ENCODE measurements at regions of chr12 and their contacts with region 1.

Region 1: DNA sequence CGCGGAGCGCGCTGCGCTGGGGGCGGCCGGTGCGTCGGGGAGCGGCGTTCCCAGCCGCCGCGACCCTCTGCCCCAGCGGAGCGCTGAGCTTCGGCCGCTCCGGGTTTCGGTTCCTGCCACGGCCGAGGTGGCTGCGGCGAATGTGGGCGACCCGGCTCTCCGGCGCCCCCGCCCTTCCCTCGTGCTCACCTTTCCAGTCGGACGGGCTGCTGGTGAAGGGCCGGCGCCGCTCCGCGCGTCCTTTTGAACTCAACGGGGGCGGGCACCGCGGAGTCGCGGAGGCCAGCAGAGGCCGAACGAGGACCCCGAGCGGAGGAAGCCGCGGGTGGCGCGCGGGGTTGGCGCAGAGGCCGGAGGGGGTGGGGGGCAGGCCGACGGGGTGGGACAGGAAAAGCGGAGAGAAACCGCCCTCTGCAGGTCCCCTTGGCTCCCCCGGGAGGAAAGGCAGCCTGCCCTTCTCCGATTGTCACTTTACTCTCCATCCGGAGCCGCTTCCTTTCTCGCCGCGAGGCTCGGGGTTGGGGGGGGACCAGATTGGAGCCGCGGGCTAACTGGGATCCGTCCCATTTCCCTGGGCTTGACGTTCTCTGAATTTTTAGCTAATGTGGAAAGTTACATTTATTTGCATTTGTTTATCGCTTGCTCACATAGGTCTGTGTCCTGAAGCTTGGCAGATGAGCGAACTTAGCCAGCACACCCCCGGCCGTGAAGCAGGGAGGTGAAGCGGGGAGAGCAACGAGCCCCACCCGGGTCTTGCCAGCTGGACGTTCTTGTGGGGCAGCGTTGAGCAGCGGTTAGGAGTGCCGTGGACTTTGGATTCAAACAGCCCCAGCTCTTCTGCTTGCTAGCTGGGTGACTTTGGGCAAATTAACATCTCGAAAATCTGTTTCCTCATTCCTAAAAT is at the start of gene SMAGP:
- DNase-seq: peak in 1 of 2 experiments; percentile 89
- H3K4me3 ChIP-seq: peak within 1 kb of the TSS; percentile 42 to 84 (median 62)
- H3K27ac ChIP-seq: no peak within 1 kb of the TSS; the same call in 1 of the 2 replicates
- H3K4me1 ChIP-seq: peaks cover 0 to 6% (median 2%) of the 10 kb centered on the region in 4 experiments; a peak in 5 of 7 replicates
- H3K27me3 ChIP-seq: peaks cover 0 to 11% (median 8%) of the 10 kb centered on the region in 4 experiments; a peak in 6 of 7 replicates
- CTCF ChIP-seq: no peak
- EP300 ChIP-seq: 0 out of 3 replicates have a peak, but pooled peaks of 1 of the 2 experiments have one; percentile 13
- POLR2A ChIP-seq: peak; percentile 43 to 63
- RAD21 ChIP-seq: no peak; a peak in 2 of 4 replicates
- total RNA-seq, gene SMAGP: 9.2 and 9.4 TPM in 2 replicates

Region 2: DNA sequence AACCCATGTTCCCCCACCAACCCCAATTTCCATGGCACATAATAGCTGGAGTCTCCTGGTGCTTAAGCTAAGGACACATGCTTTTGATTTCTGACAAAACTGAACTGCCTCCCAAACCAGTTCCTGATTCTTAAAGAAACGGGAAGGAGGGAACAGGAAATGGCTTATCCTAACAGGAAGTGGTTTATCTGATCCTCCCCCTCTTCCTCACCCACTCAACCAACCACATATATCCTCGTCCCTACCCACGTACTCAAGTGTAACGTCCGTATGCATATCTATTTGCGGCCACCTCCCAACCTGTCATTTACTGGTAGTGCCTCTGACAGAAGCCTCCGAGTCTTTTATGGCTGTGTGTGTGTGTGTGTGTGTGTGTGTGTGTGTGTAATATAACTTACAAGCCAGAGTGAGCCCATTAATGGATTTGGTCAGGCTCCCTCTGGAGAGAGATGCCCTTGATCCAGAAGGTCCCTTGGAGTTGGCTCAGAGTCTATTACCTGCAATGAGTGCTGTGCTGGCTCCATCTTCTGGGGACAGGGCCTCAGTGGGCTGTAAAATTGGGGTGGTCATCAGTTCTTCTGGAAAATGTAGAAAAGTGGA is 24.0 kb before region 1 on chr12:
- CTCF ChIA-PET with region 1: interaction called, 11 read pairs
- POLR2A ChIA-PET with region 1: interaction called, 3 read pairs
- DNase-seq: no peak
- H3K4me3 ChIP-seq: no peak overlapping the region
- H3K27ac ChIP-seq: no peak overlapping the region
- H3K4me1 ChIP-seq: peaks cover 0 to 19% (median 7%) of the 10 kb centered on the region in 4 experiments; a peak in 6 of 7 replicates
- H3K27me3 ChIP-seq: no peaks in the 10 kb centered on the region
- CTCF ChIP-seq: peak in 2 of 3 experiments; percentile 39 to 40; a peak in 3 of 4 replicates
- EP300 ChIP-seq: no peak
- POLR2A ChIP-seq: no peak
- RAD21 ChIP-seq: peak; percentile 56 to 64